Activated B cell treated with CpG ODN at 0.5 μM for 24 hours (primary cell): ENCODE measurements at regions of chr6 and their contacts with region 1.

Region 1: DNA sequence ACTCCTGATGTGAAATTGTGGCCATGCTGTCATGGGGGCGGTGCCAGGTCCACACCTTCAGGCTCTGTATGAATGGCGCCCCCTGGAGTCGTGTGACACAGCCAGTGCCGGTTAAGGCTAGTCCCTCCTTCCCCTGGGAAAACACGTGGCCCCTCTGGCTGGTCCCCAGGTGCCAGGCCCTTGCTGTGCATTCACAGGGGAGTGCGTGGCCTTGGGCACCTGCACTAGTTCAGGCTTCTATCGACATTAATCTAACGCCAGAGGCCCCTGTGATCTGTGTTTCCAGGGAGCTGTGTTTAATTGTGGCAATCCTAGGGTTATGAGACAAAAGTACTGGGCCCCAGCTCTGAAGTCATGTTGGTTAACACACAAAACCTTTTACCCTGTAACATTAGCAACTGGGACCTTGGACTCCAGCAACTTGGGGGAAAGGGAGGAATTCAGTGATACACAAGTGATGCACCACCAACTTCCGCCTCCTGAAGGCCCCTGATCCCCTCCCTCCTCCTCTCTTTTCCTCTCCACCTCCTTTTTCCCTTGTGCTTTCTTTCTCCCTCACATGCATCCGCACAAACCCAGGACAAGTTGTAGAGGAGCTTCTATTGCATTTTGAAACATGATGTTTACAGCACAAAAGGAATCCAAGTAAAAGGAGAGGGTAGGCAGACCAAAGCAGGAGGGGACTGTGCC is 74.0 kb downstream of the SSR1 start:
- DNase-seq: peak; percentile 71
- ATAC-seq: peak; percentile 92
- H3K4me3 Mint-ChIP-seq: no peak overlapping the region
- H3K27ac Mint-ChIP-seq: peak overlapping the region; percentile 65
- H3K4me1 Mint-ChIP-seq: peaks cover 56% of the 10 kb centered on the region
- H3K27me3 Mint-ChIP-seq: no peaks in the 10 kb centered on the region
- CTCF ChIP-seq: no peak

Region 2: DNA sequence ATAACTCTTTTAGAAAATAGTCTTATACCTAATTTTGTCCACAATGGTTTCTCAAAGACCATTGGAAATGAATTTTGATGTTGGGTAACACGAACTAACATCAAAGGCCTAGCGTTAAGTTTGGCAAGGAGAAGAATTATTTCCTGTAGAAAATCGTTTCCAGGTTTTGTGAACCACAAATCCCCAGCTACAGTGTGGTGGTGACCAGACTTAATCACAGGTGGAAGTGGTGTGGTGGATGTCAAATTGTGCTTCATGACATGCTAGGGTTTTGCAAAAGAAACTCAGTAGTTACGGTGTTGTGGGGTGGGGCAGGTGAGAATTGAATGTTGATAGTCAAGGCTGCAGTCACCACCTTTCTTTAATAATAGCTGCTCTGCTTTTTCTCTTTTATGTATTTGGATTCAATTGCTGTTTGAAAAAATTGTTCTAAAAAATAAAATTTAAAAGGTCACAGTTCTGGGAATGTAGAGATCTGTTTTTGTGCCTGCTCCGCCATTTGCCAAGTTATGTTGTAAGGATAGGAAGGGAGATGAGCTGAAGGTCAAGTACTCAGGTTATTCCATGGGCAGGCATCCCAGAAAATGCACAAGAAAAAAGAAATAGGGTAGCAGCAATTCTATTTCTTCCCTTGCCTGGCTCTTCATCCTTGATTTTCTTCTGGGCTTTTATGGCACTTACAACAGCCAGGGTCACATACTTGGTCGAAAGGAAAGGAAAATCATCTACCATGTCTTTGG is 1002.1 kb before region 1 on chr6:
- CTCF ChIA-PET with region 1: no interaction called
- POLR2A ChIA-PET with region 1: no interaction called
- intact Hi-C with region 1: no loop called
- DNase-seq: no peak
- ATAC-seq: no peak
- H3K4me3 Mint-ChIP-seq: no peak overlapping the region
- H3K27ac Mint-ChIP-seq: no peak overlapping the region
- H3K4me1 Mint-ChIP-seq: no peaks in the 10 kb centered on the region
- H3K27me3 Mint-ChIP-seq: peaks cover 8% of the 10 kb centered on the region
- CTCF ChIP-seq: no peak

Region 3: DNA sequence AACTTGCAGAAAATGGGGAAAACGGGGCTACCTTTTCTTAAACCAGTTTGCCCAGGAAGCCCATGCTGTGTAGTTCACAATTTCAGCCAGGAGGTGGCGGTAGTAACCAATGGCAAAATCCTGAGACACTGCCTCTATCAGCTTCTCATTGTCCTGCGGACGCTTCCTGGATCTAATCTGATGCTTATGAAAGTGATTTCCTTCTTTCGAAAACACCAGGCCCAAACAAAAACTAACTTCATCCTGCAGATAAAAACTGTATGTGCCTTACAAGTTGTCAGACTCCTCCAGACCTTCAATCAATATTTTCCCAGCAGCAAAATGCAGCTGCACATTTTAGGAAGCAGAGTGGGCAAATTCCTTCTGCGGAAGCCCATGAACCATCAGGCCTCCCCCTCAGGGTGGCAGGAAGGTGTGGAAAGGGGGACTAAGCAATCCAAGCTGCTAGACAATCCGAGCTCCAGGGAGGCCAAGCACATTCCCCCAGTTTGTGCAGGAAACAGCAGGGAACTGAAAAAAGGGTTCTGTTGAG is 562.1 kb before region 1 on chr6:
- CTCF ChIA-PET with region 1: interaction called, 24 read pairs
- POLR2A ChIA-PET with region 1: no interaction called
- intact Hi-C with region 1: loop called (anchors 1 kb)
- DNase-seq: peak; percentile 65
- ATAC-seq: peak; percentile 94
- H3K4me3 Mint-ChIP-seq: no peak overlapping the region
- H3K27ac Mint-ChIP-seq: no peak overlapping the region
- H3K4me1 Mint-ChIP-seq: peaks cover 8% of the 10 kb centered on the region
- H3K27me3 Mint-ChIP-seq: peaks cover 6% of the 10 kb centered on the region
- CTCF ChIP-seq: peak; percentile 95

Region 4: GRCh38 chr6:6758915-6759654 is 480.0 kb before region 1 on chr6:
- CTCF ChIA-PET with region 1: interaction called, 54 read pairs
- POLR2A ChIA-PET with region 1: no interaction called
- intact Hi-C with region 1: loop called (anchors 1 kb)
- DNase-seq: peak; percentile 22
- ATAC-seq: peak; percentile 88
- H3K4me3 Mint-ChIP-seq: no peak overlapping the region
- H3K27ac Mint-ChIP-seq: no peak overlapping the region
- H3K4me1 Mint-ChIP-seq: peaks cover 21% of the 10 kb centered on the region
- H3K27me3 Mint-ChIP-seq: peaks cover 9% of the 10 kb centered on the region
- CTCF ChIP-seq: no peak

Region 5: GRCh38 chr6:6803572-6803971 is 435.5 kb before region 1 on chr6:
- CTCF ChIA-PET with region 1: interaction called, 3 read pairs
- POLR2A ChIA-PET with region 1: no interaction called
- intact Hi-C with region 1: loop called (anchors 5 kb)
- DNase-seq: peak; percentile 56
- ATAC-seq: peak; percentile 85
- H3K4me3 Mint-ChIP-seq: peak overlapping the region; percentile 4
- H3K27ac Mint-ChIP-seq: peak overlapping the region; percentile 42
- H3K4me1 Mint-ChIP-seq: peaks cover 79% of the 10 kb centered on the region
- H3K27me3 Mint-ChIP-seq: no peaks in the 10 kb centered on the region
- CTCF ChIP-seq: no peak

Region 6: DNA sequence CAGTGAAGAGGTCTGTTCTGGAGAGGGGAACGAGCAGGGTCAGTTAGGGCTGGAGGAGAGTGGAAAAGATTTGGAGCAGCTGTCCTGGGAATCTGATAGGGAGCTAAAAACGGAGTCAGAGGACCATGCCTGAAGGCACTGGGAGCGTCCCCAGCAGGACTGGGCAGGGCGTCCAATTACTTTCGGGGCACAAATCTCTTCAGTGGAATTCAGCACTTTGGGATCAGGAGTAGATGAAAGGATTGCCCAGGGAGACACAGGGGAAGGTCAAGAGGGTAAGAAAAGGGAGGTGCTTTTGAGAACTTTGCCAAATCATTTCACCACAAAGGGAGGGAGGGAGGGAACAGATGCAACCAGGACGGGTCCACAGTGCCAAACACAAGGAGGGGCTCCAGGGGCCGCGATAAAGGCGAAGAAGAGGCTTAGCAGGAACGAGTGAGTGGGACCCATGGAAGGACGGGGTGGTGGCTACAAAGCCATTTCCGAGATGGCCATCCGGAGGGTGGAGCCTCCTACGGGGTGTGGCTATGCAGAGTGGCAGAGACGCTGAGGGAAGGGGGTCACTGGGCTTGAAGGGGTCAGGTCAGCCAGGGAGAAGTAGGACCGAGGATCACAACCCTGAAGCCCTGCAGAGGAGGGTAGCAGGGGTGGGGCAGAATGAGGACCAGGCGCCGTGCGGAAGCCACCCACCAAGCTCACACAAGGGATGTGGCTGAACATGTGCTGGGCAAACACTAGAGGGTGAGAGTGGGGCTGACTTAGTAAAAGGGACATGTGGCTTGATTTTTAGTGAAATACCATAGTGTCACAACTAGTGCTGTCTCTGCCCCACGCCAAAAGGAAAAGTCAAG is 311.3 kb before region 1 on chr6:
- CTCF ChIA-PET with region 1: interaction called, 3 read pairs
- POLR2A ChIA-PET with region 1: no interaction called
- intact Hi-C with region 1: loop called (anchors 1 kb)
- DNase-seq: no peak
- ATAC-seq: peak; percentile 45
- H3K4me3 Mint-ChIP-seq: no peak overlapping the region
- H3K27ac Mint-ChIP-seq: no peak overlapping the region
- H3K4me1 Mint-ChIP-seq: peaks cover 12% of the 10 kb centered on the region
- H3K27me3 Mint-ChIP-seq: peaks cover 11% of the 10 kb centered on the region
- CTCF ChIP-seq: no peak

Region 7: GRCh38 chr6:7107578-7108195 is 131.4 kb before region 1 on chr6 and contains the start of gene RREB1:
- CTCF ChIA-PET with region 1: interaction called, 3 read pairs
- POLR2A ChIA-PET with region 1: interaction called, 4 read pairs
- intact Hi-C with region 1: loop called (anchors 2 kb)
- DNase-seq: peak; percentile 61
- ATAC-seq: peak; percentile 64
- H3K4me3 Mint-ChIP-seq: peak within 1 kb of the TSS; percentile 95
- H3K27ac Mint-ChIP-seq: peak within 1 kb of the TSS; percentile 94
- H3K4me1 Mint-ChIP-seq: peaks cover 38% of the 10 kb centered on the region
- H3K27me3 Mint-ChIP-seq: no peaks in the 10 kb centered on the region
- CTCF ChIP-seq: no peak
- total RNA-seq, gene RREB1: 62.2 and 67.7 TPM in 2 replicates